Activated CD4-positive, alpha-beta T cell treated with anti-CD3 and anti-CD28 coated beads for 36 hours (primary cell): ENCODE measurements at regions of chr13 and their contacts with region 1.

Region 1: GRCh38 chr13:41456768-41457588 is at the start of gene RGCC:
- DNase-seq: peak; percentile 96
- ATAC-seq: peak; percentile 74
- H3K4me3 Mint-ChIP-seq: peak within 1 kb of the TSS; percentile 82
- H3K27ac Mint-ChIP-seq: peak within 1 kb of the TSS; percentile 97
- H3K4me1 Mint-ChIP-seq: peaks cover 36% of the 10 kb centered on the region
- H3K27me3 Mint-ChIP-seq: no peaks in the 10 kb centered on the region
- total RNA-seq, gene RGCC: 134 to 146 TPM

Region 2: DNA sequence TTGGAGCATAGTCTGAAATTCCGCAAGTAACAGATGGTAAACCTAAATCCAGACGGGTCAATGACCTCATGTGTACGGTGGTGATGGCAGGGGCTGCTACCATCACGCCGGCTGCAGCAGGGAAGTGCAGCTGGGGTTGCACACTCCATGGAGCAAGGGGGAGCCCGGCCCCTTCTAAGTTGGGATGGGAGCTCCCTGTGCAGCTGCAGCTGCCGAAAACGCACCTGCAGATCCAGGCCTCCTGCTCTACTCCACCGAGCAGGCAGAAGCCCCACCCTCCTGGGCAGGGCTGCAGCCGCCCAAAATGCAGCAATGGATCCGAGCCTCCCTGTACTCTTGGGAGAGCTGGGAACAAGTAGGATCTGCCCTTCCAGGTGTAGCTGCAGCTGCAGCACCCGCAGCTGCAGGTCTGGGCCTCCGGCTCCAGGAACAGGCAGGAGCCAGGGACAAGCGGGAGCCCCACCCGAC is 349.8 kb before region 1 on chr13:
- CTCF ChIA-PET with region 1: no interaction called
- POLR2A ChIA-PET with region 1: no interaction called
- intact Hi-C with region 1: no loop called
- DNase-seq: no peak
- ATAC-seq: no peak
- H3K4me3 Mint-ChIP-seq: no peak overlapping the region
- H3K27ac Mint-ChIP-seq: no peak overlapping the region
- H3K4me1 Mint-ChIP-seq: no peaks in the 10 kb centered on the region
- H3K27me3 Mint-ChIP-seq: no peaks in the 10 kb centered on the region

Region 3: GRCh38 chr13:41132512-41133152 is 324.3 kb before region 1 on chr13 and contains the start of gene KBTBD6:
- CTCF ChIA-PET with region 1: no interaction called
- POLR2A ChIA-PET with region 1: no interaction called
- intact Hi-C with region 1: loop called in 1 of 2 experiments (anchors 5 kb)
- DNase-seq: peak; percentile 98
- ATAC-seq: peak; percentile 95
- H3K4me3 Mint-ChIP-seq: peak within 1 kb of the TSS; percentile 92
- H3K27ac Mint-ChIP-seq: peak within 1 kb of the TSS; percentile 93
- H3K4me1 Mint-ChIP-seq: peaks cover 46% of the 10 kb centered on the region
- H3K27me3 Mint-ChIP-seq: no peaks in the 10 kb centered on the region
- total RNA-seq, gene KBTBD6: 3.4 to 4.4 TPM

Region 4: DNA sequence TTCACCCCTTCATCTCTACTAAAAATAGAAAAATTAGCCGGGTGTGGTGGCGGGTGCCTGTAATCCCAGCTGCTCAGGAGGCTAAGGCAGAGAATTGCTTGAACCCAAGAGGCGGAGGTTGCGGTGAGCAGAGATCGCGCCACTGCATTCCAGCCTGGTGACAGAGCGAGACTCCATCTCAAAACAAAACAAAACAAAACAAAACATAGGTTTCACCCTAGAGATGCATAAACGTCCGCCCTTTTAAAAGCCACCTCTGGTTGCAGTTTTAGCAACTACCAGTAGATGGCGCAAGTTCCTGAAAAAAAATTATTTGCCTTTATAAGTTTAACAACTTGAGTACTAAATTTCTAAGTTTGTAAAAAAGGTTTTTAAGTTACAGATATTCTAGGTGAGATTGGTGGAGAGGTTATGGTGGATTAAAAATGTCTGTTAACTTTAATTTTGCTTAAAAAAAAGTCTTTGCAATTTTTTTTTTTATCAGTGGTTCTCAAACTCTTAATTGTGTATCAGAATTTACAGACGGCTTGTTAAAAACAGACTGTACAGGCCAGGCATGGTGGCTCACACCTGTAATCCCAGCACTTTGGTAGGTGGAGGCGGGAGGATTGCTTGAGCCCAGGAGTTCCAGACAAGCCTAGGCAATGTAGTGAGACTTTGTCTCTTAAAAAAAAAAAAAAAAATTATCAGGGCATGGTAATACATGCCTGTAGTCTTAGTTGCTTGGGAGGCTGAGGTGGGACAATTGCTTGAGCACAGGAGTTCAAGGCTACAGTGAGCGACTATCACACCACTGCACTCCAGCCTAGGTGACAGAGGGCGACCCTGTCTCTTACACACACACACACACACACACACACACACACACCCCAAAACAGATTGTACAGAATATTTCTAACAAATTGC is 103.8 kb before region 1 on chr13:
- CTCF ChIA-PET with region 1: no interaction called
- POLR2A ChIA-PET with region 1: no interaction called
- intact Hi-C with region 1: loop called (anchors 2 to 5 kb)
- DNase-seq: peak; percentile 55
- ATAC-seq: peak; percentile 54
- H3K4me3 Mint-ChIP-seq: no peak overlapping the region
- H3K27ac Mint-ChIP-seq: peak overlapping the region; percentile 78
- H3K4me1 Mint-ChIP-seq: peaks cover 55% of the 10 kb centered on the region
- H3K27me3 Mint-ChIP-seq: no peaks in the 10 kb centered on the region

Region 5: GRCh38 chr13:41492404-41493260 is 35.7 kb after region 1 on chr13:
- CTCF ChIA-PET with region 1: interaction called, 22 read pairs
- POLR2A ChIA-PET with region 1: interaction called, 8 read pairs
- intact Hi-C with region 1: no loop called
- DNase-seq: peak; percentile 44
- ATAC-seq: peak; percentile 76
- H3K4me3 Mint-ChIP-seq: peak overlapping the region; percentile 29
- H3K27ac Mint-ChIP-seq: peak overlapping the region; percentile 92
- H3K4me1 Mint-ChIP-seq: peaks cover 89% of the 10 kb centered on the region
- H3K27me3 Mint-ChIP-seq: no peaks in the 10 kb centered on the region

Region 6: GRCh38 chr13:41554626-41555386 is 97.8 kb after region 1 on chr13:
- CTCF ChIA-PET with region 1: interaction called, 3 read pairs
- POLR2A ChIA-PET with region 1: no interaction called
- intact Hi-C with region 1: loop called in 1 of 2 experiments (anchors 5 kb)
- DNase-seq: peak; percentile 67
- ATAC-seq: peak; percentile 96
- H3K4me3 Mint-ChIP-seq: no peak overlapping the region
- H3K27ac Mint-ChIP-seq: no peak overlapping the region
- H3K4me1 Mint-ChIP-seq: peaks cover 6% of the 10 kb centered on the region
- H3K27me3 Mint-ChIP-seq: no peaks in the 10 kb centered on the region

Region 7: DNA sequence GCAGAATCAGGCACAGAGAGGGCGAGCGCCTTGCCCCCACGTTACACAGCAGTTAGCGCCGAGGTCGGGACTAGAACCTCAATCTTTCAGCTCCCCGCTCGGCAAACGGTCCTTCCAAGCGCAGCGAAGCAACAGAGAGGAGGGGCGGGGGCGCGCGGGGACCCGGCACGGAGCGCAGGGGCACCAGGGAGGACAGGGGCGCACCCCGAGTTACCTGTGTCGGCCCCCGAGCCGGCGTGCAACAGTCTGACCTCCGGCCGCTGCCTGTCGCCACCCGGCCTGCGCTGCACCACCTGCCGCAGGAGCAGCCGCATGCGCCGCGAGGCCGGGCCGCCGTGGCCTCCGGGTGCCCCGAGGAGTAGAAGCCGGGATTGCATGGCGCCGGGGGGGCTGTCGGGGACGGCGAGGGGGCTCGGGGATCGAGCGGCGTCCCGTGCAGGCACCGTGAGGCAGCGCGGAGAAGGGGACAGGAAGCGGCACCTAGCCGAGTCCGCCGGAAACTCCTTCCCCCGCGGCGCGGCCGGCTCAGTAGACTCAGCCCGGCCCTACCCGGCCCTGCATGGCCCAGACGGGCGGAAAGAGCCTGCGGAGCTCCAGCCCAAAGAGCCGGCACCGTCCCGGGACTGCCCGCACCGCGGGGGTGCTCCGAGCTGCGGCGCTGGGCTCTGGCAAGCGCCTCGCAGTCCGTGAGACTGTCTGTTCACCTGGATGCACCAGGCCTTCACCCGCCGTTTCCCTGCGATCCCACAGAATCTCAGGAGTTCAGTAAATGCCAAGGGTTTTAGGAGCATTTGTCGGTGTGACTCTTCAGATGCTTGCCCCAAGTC is 503.9 kb after region 1 on chr13 and contains the start of gene VWA8:
- CTCF ChIA-PET with region 1: no interaction called
- POLR2A ChIA-PET with region 1: no interaction called
- intact Hi-C with region 1: loop called in 1 of 2 experiments (anchors 2 kb)
- DNase-seq: peak; percentile 93
- ATAC-seq: peak; percentile 81
- H3K4me3 Mint-ChIP-seq: peak within 1 kb of the TSS; percentile 92
- H3K27ac Mint-ChIP-seq: peak within 1 kb of the TSS; percentile 99
- H3K4me1 Mint-ChIP-seq: peaks cover 60% of the 10 kb centered on the region
- H3K27me3 Mint-ChIP-seq: peaks cover 2% of the 10 kb centered on the region
- total RNA-seq, gene VWA8: 21.7 to 26.2 TPM